Prostate gland (tissue), 2 donors: ENCODE measurements at regions of chr21 and their contacts with region 1.

Region 1: GRCh38 chr21:28669321-28669720 is 323.4 kb downstream of the LTN1 start:
- DNase-seq: no peak
- H3K4me3 ChIP-seq: no peak overlapping the region
- H3K27ac ChIP-seq: no peak overlapping the region
- H3K4me1 ChIP-seq: no peaks in the 10 kb centered on the region
- H3K27me3 ChIP-seq: no peaks in the 10 kb centered on the region
- CTCF ChIP-seq: no peak
- POLR2A ChIP-seq: no peak

Region 2: GRCh38 chr21:28604946-28605537 is 64.3 kb before region 1 on chr21:
- intact Hi-C with region 1: loop called (anchors 10 kb)
- DNase-seq: no peak
- H3K4me3 ChIP-seq: no peak overlapping the region
- H3K27ac ChIP-seq: no peak overlapping the region
- H3K4me1 ChIP-seq: no peaks in the 10 kb centered on the region
- H3K27me3 ChIP-seq: no peaks in the 10 kb centered on the region
- CTCF ChIP-seq: no peak
- POLR2A ChIP-seq: no peak